ENCODE measurements at regions of chr1 and their contacts with region 1.

Region 1: GRCh38 chr1:156804572-156805243 is 11.9 kb downstream of the SH2D2A start:
- DNase-seq: no peak
- ATAC-seq: peak; percentile 10 to 40 (median 29)
- H3K4me3 ChIP-seq: no peak overlapping the region
- H3K27ac ChIP-seq: peak overlapping the region; percentile 37
- H3K4me1 ChIP-seq: peaks cover 53% of the 10 kb centered on the region
- H3K27me3 ChIP-seq: no peaks in the 10 kb centered on the region
- CTCF ChIP-seq: no peak

Region 2: GRCh38 chr1:156692925-156693847 is 111.5 kb before region 1 on chr1:
- intact Hi-C with region 1: no loop called
- DNase-seq: no peak
- ATAC-seq: no peak
- H3K4me3 ChIP-seq: no peak overlapping the region
- H3K27ac ChIP-seq: no peak overlapping the region
- H3K4me1 ChIP-seq: peaks cover 16% of the 10 kb centered on the region
- H3K27me3 ChIP-seq: peaks cover 0 to 46% (median 10%) of the 10 kb centered on the region in 3 donors
- CTCF ChIP-seq: no peak

Region 3: GRCh38 chr1:156833603-156834002 is 28.9 kb after region 1 on chr1:
- intact Hi-C with region 1: loop called in 1 of 2 experiments (anchors 2 kb)
- DNase-seq: no peak
- ATAC-seq: no peak
- H3K4me3 ChIP-seq: no peak overlapping the region
- H3K27ac ChIP-seq: no peak overlapping the region
- H3K4me1 ChIP-seq: no peaks in the 10 kb centered on the region
- H3K27me3 ChIP-seq: peaks cover 0 to 2% (median 0%) of the 10 kb centered on the region in 3 donors
- CTCF ChIP-seq: no peak

Region 4: DNA sequence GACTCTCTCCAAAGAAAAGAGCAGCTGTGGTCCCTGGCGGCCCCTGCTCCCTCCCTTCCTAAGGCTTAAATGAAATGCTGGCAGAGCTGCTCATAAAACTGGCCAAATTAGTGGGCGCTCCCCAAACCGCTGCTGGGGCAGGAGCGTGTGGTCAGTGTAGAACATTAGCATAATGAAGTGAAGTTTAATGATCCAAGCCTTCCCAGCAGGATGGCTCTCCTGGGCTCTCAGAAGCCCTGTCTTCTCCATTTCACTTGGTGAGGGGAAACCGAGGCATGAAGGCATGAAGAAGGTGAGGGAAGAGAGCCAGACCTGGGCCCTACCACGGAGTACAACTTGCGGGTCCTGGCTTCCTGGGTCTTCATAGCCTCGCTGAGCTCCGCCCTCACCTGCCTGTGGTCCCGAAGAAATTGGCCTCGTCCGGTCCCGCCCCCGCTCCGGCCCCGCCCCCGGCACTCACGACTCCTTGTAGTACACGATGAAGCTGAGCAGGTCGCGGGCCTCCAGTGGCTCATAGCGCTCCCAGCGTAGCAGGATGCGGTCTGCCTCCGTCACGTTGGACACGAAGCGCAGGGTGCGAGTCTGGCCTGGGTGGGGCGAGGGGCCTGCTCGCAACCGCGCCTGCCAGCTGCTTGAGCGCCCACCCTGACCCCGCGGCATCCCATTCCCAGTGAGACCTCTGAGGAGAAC is 43.9 kb after region 1 on chr1:
- intact Hi-C with region 1: no loop called
- DNase-seq: peak in 1 of 2 donors; percentile 60
- ATAC-seq: no peak
- H3K4me3 ChIP-seq: no peak overlapping the region
- H3K27ac ChIP-seq: no peak overlapping the region
- H3K4me1 ChIP-seq: peaks cover 14% of the 10 kb centered on the region
- H3K27me3 ChIP-seq: peaks cover 0 to 44% (median 24%) of the 10 kb centered on the region in 3 donors
- CTCF ChIP-seq: no peak

Measured in psoas muscle (tissue), 8 donors.